HCT116 (cell line): ENCODE measurements at regions of chr6 and their contacts with region 1.

Region 1: DNA sequence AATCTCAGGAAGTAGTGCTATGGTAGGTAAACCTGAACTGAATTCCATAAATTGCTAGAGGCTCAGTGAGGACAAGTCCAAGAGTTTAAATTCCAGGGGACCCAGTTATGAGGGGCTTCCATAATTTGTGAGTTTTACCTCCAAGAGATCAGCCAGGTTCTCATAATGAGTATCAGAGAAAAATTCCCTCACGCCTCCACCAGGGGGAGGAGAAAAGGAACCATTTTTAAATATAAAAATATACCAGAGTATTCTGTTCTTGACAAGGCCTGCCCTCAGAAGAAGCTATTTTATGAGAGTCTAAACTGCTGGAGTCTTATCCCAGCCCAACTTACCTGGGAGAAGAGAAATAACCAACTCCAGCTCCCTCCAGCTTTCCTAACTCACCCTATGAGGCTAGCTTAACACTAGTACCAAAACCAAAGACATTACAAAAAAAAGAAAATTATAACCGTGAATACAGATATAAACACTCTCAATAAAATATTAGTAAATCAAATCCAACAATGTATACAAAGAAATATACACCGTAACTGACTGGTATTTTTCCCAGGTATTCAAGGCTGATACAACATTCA is 158.7 kb downstream of the TFAP2A start:
- DNase-seq: peak; percentile 7
- ATAC-seq: peak; percentile 82
- H3K4me3 ChIP-seq: no peak overlapping the region
- H3K27ac ChIP-seq: no peak overlapping the region
- H3K4me1 ChIP-seq: no peaks in the 10 kb centered on the region
- H3K27me3 ChIP-seq: no peaks in the 10 kb centered on the region
- CTCF ChIP-seq: peak; percentile 43 to 59 (median 56); a peak in 5 of 6 replicates
- POLR2A ChIP-seq: no peak
- RAD21 ChIP-seq: peak; percentile 47

Region 2: GRCh38 chr6:10276106-10276505 is 19.9 kb after region 1 on chr6:
- CTCF ChIA-PET with region 1: no interaction called
- POLR2A ChIA-PET with region 1: no interaction called
- RAD21 ChIA-PET with region 1: no interaction called
- intact Hi-C with region 1: no loop called
- DNase-seq: no peak
- ATAC-seq: no peak
- H3K4me3 ChIP-seq: no peak overlapping the region
- H3K27ac ChIP-seq: no peak overlapping the region
- H3K4me1 ChIP-seq: peaks cover 0 to 4% of the 10 kb centered on the region in 2 experiments; a peak in 2 of 4 replicates
- H3K27me3 ChIP-seq: no peaks in the 10 kb centered on the region
- CTCF ChIP-seq: no peak
- POLR2A ChIP-seq: no peak
- RAD21 ChIP-seq: no peak

Region 3: GRCh38 chr6:10404107-10404798 is 148.1 kb after region 1 on chr6:
- CTCF ChIA-PET with region 1: interaction called, 3 read pairs
- POLR2A ChIA-PET with region 1: no interaction called
- RAD21 ChIA-PET with region 1: no interaction called
- intact Hi-C with region 1: loop called (anchors 5 kb)
- DNase-seq: peak; percentile 92
- ATAC-seq: peak; percentile 92
- H3K4me3 ChIP-seq: peak overlapping the region; percentile 77 to 83
- H3K27ac ChIP-seq: peak overlapping the region; percentile 88
- H3K4me1 ChIP-seq: peaks cover 8 to 38% of the 10 kb centered on the region in 2 experiments; a peak in 3 of 4 replicates
- H3K27me3 ChIP-seq: no peaks in the 10 kb centered on the region
- CTCF ChIP-seq: peak; percentile 37 to 48 (median 46); a peak in 5 of 6 replicates
- POLR2A ChIP-seq: peak; percentile 69
- RAD21 ChIP-seq: peak; percentile 86

Region 4: DNA sequence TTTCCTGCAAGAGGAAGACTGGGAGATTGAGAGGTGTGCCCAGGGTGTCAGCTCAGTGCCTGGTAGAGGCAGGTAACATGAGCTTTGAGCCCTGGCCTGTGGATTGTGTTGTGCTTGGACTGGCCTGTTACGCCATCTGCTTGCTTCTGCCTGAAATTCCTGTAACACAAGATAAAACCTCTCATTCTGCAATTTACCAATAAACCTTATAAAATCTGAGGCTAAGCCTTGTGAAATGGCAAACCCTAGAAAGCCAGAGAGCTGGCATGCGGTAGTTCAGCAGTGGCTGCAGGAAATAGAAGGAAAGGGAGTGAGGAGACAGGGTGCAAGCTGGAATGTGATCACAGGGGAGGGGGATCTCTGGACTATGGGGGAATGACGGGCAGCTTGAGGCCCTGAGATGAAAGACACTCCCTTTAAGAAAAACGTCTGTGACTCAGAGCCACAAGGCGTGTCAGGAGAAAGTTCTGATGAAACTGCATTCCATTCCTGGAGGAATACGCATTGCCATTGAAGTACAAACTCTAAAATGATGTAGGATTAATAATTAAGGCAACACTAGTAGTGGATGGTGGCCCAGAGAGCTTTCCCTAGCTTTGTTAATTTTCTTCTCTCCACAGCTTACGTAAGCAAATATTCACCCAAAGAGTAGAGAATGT is 184.9 kb after region 1 on chr6:
- CTCF ChIA-PET with region 1: no interaction called
- POLR2A ChIA-PET with region 1: no interaction called
- RAD21 ChIA-PET with region 1: no interaction called
- intact Hi-C with region 1: no loop called
- DNase-seq: peak; percentile 93
- ATAC-seq: peak; percentile 92
- H3K4me3 ChIP-seq: peak overlapping the region; percentile 8 to 53; a peak in 3 of 4 replicates
- H3K27ac ChIP-seq: peak overlapping the region; percentile 54
- H3K4me1 ChIP-seq: peaks cover 14 to 43% of the 10 kb centered on the region in 2 experiments
- H3K27me3 ChIP-seq: no peaks in the 10 kb centered on the region
- CTCF ChIP-seq: 0 out of 6 replicates have a peak, but pooled peaks of 1 of the 3 experiments have one; percentile 15
- POLR2A ChIP-seq: no peak
- RAD21 ChIP-seq: peak; percentile 26